Spleen (tissue), 13 donors: ENCODE measurements at regions of chr1 and their contacts with region 1.

Region 1: GRCh38 chr1:223683586-223684487 is 18.3 kb upstream of the CAPN8 start:
- DNase-seq: no peak
- H3K4me3 ChIP-seq: no peak overlapping the region
- H3K27ac ChIP-seq: no peak overlapping the region
- H3K4me1 ChIP-seq: no peaks in the 10 kb centered on the region
- H3K27me3 ChIP-seq: peaks cover 0 to 17% (median 0%) of the 10 kb centered on the region in 7 donors
- CTCF ChIP-seq: peak; percentile 30 to 68 (median 53)
- POLR2A ChIP-seq: no peak

Region 2: DNA sequence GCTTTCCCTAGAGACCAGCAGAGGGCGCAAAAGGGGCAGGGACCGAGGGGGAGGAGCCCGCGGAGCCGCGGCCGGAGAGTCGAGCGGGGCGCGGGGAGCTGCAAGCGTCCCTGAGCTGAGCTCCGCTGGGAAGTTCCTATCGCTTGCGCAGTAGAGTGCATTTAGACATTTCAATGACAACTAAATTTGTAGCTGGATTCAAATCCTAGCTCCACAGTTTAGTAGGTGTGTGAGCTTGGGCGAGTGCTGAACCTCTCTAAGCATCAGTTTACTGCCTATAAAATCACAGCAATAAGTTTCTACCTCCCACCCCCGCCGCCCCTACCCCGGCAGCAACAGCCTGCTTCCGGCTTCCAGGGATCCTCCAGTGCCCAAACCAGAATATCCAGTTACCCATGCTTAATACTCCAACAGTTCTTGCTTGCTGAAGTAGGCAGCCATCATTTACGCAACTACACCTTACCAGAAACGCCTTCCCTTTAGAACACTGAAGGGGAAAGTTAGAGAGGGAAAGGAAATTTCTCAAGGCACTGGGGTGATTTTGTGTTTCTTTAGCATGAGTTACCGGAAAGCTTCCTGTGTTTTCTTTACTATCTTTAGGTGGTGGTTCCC is 549.9 kb before region 1 on chr1:
- intact Hi-C with region 1: loop called (anchors 5 kb)
- DNase-seq: peak; percentile 96
- H3K4me3 ChIP-seq: peak overlapping the region; percentile 30 to 68 (median 40)
- H3K27ac ChIP-seq: peak overlapping the region in 6 of 8 donors; percentile 52 to 84 (median 70)
- H3K4me1 ChIP-seq: peaks cover 9 to 69% (median 34%) of the 10 kb centered on the region in 6 donors
- H3K27me3 ChIP-seq: peaks cover 0 to 47% (median 0%) of the 10 kb centered on the region in 7 donors
- CTCF ChIP-seq: peak in 5 of 11 experiments; percentile 21 to 97 (median 95)
- POLR2A ChIP-seq: no peak

Region 3: DNA sequence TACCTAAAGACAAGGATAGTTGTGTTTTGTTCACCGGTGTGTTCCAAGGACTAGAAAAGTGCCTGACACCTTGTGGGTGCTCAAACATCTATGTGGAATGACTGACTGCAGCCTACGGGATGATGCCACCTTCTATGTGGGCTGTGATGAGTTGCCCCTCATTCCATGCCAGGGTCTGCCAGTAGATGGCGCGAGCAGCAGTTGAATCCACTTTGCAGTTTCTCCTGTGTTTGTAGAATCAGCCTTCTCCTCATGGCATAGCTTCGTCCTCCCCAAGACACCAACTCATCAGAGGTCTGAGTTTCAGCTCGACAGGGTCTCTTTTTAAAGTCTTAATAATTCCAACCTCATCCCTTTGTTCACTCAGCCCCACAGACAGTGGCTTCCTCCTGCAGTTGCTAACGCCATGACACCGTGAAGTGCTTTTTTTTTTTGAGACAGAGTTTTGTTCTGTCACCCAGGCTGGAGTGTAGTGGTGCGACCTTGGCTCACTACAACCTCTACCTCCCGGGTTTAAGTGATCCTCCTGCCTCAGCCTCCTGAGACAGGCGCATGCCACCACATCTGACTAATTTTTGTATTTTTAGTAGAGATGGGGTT is 152.0 kb before region 1 on chr1:
- intact Hi-C with region 1: loop called (anchors 5 kb)
- DNase-seq: no peak
- H3K4me3 ChIP-seq: no peak overlapping the region
- H3K27ac ChIP-seq: no peak overlapping the region
- H3K4me1 ChIP-seq: no peaks in the 10 kb centered on the region
- H3K27me3 ChIP-seq: peaks cover 0 to 15% (median 0%) of the 10 kb centered on the region in 7 donors
- CTCF ChIP-seq: peak in 9 of 11 experiments; percentile 25 to 64 (median 56)
- POLR2A ChIP-seq: no peak